HAP-1 (cell line): ENCODE measurements at regions of chr2 and their contacts with region 1.

Region 1: GRCh38 chr2:237744613-237745249 is 53.8 kb upstream of the RBM44 start:
- DNase-seq: peak; percentile 31 to 84
- H3K4me3 ChIP-seq: no peak overlapping the region
- H3K4me1 ChIP-seq: no peaks in the 10 kb centered on the region
- H3K27me3 ChIP-seq: no peaks in the 10 kb centered on the region

Region 2: DNA sequence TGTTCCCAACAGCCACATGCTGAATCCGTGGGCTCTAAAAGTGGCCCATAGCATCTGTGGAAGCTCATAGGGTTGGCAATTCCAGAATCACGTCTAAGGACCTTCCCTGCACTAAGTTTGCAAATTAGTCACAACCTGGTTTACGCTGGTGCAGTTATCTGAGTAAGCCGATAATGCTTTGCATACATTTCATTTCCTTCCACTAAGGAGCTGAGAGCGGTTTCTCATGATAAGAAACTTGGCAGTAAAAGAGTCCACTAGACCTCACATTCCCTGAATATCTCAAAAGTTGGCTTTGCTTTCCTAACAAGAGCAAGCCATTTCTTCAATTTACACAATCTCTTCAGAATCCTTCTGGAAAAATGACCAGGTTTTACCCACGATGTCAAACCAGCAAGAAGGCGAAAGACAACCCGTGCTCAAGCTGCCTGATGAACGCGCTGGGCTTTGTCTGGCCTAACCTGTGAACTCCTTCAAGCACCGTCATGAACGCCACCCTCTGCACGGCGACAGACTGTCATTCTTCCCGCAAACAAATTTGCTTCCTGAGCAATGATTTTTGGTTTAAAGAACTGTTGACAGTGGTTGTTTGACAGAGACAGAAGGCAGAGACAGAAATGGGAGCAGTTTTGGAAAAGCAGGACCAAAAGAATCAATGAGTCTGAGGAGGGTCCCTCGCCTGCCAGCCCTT is 732.0 kb before region 1 on chr2:
- in situ Hi-C with region 1: no loop called
- DNase-seq: no peak
- H3K4me3 ChIP-seq: no peak overlapping the region
- H3K4me1 ChIP-seq: no peaks in the 10 kb centered on the region
- H3K27me3 ChIP-seq: no peaks in the 10 kb centered on the region

Region 3: GRCh38 chr2:237326266-237327171 is 418.2 kb before region 1 on chr2:
- in situ Hi-C with region 1: no loop called
- DNase-seq: no peak
- H3K4me3 ChIP-seq: no peak overlapping the region
- H3K4me1 ChIP-seq: no peaks in the 10 kb centered on the region
- H3K27me3 ChIP-seq: no peaks in the 10 kb centered on the region

Region 4: GRCh38 chr2:237456200-237456843 is 288.4 kb before region 1 on chr2:
- in situ Hi-C with region 1: no loop called
- DNase-seq: no peak
- H3K4me3 ChIP-seq: no peak overlapping the region
- H3K4me1 ChIP-seq: no peaks in the 10 kb centered on the region
- H3K27me3 ChIP-seq: no peaks in the 10 kb centered on the region

Region 5: GRCh38 chr2:237674731-237675276 is 69.9 kb before region 1 on chr2:
- in situ Hi-C with region 1: loop called (anchors 5 kb)
- DNase-seq: peak in 1 of 2 experiments; percentile 42
- H3K4me3 ChIP-seq: no peak overlapping the region
- H3K4me1 ChIP-seq: peaks cover 14% of the 10 kb centered on the region
- H3K27me3 ChIP-seq: no peaks in the 10 kb centered on the region